Activated CD4-positive, alpha-beta T cell treated with anti-CD3 and anti-CD28 coated beads for 36 hours (primary cell): ENCODE measurements at regions of chr11 and their contacts with region 1.

Region 1: GRCh38 chr11:75525596-75526541 is at the start of gene GDPD5:
- DNase-seq: peak; percentile 93
- ATAC-seq: peak; percentile 94
- H3K4me3 Mint-ChIP-seq: peak within 1 kb of the TSS; percentile 76
- H3K27ac Mint-ChIP-seq: peak within 1 kb of the TSS; percentile 29
- H3K4me1 Mint-ChIP-seq: peaks cover 18% of the 10 kb centered on the region
- H3K27me3 Mint-ChIP-seq: no peaks in the 10 kb centered on the region
- total RNA-seq, gene GDPD5: 16.8 to 22.0 TPM

Region 2: GRCh38 chr11:75270896-75271418 is 254.9 kb before region 1 on chr11:
- CTCF ChIA-PET with region 1: interaction called, 3 read pairs
- POLR2A ChIA-PET with region 1: no interaction called
- intact Hi-C with region 1: loop called in 1 of 2 experiments (anchors 10 kb)
- DNase-seq: no peak
- ATAC-seq: no peak
- H3K4me3 Mint-ChIP-seq: no peak overlapping the region
- H3K27ac Mint-ChIP-seq: no peak overlapping the region
- H3K4me1 Mint-ChIP-seq: peaks cover 25% of the 10 kb centered on the region
- H3K27me3 Mint-ChIP-seq: no peaks in the 10 kb centered on the region

Region 3: GRCh38 chr11:75429902-75430719 is 95.8 kb before region 1 on chr11:
- CTCF ChIA-PET with region 1: interaction called, 4 read pairs
- POLR2A ChIA-PET with region 1: no interaction called
- intact Hi-C with region 1: loop called in 1 of 2 experiments (anchors 1 kb)
- DNase-seq: peak; percentile 77
- ATAC-seq: peak; percentile 65
- H3K4me3 Mint-ChIP-seq: peak overlapping the region; percentile 60
- H3K27ac Mint-ChIP-seq: no peak overlapping the region
- H3K4me1 Mint-ChIP-seq: peaks cover 16% of the 10 kb centered on the region
- H3K27me3 Mint-ChIP-seq: peaks cover 49% of the 10 kb centered on the region

Region 4: DNA sequence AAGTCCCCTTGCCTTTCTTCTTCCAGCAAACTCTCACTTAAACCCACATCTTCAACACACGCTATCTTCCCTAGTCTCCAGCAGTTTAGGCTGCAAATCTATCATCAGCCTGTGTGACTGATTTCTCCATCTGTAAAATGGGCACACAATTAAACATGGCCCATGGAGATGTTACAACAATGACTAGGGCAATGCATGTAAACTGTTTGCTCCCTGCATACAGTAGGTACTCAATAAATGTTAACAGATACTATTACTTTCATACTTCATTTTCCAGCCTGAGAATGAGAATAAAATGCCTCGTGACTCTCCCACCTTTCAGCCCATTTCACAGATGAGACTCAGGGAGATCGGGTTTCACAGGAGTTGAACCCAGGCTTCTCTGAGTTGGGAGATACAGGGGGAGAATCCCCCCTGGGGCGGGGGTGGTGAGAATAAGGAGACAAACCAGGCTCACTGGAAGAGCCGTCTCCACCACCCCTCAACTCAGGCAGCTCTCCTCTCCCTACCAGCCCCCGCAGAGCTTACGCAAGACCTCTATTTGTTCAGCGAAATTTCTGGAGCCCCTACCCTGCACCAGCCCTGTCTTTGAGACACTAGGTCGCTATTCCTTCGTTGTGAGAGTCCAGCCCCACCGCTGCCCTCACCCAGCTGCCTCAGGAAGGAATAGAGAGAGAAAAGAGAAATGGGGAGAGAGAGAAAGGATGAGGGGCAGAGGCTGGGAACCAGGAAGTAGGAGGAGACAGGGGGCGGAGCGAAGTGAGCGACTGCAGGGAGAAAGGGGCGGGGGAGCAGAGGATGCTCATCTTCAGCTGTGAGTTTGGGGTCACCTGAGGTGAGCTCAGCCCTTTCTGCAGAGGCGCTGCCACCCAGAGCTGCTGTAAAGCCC is 50.7 kb before region 1 on chr11:
- CTCF ChIA-PET with region 1: interaction called, 3 read pairs
- POLR2A ChIA-PET with region 1: no interaction called
- intact Hi-C with region 1: loop called in 1 of 2 experiments (anchors 1 kb)
- DNase-seq: peak; percentile 81
- ATAC-seq: peak; percentile 88
- H3K4me3 Mint-ChIP-seq: peak overlapping the region; percentile 35
- H3K27ac Mint-ChIP-seq: peak overlapping the region; percentile 76
- H3K4me1 Mint-ChIP-seq: peaks cover 17% of the 10 kb centered on the region
- H3K27me3 Mint-ChIP-seq: no peaks in the 10 kb centered on the region

Region 5: DNA sequence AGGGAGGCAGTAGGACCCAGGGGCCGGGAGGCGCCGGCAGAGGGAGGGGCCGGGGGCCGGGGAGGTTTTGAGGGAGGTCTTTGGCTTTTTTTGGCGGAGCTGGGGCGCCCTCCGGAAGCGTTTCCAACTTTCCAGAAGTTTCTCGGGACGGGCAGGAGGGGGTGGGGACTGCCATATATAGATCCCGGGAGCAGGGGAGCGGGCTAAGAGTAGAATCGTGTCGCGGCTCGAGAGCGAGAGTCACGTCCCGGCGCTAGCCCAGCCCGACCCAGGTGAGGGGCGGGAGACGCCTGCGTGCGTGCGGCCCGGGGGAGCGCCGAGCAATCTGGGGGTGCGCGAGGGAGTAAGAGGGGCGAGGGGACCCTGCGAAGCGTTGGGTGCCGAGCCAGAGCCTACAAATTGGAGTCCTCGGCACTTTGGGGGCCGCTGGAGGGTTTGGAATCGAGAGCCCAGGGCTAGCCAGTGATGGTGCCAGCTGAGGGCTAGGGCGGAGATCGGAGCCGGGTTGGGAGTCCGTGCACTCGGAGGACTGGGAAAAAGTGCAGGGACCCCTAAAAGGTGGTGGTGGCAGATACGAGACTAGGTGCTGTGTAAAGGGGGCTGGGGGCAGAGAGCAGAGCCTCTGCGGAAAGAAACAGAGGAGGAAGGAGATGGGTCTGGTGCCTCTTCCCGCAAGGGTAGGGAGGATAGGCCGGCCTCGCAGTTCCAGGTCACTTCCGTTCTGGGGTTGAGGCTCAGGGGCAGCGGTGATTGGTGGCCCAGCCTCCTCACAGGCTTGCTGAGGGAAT is 36.4 kb after region 1 on chr11 and contains the start of gene SERPINH1:
- CTCF ChIA-PET with region 1: interaction called, 4 read pairs
- POLR2A ChIA-PET with region 1: interaction called, 5 read pairs
- intact Hi-C with region 1: loop called in 1 of 2 experiments (anchors 1 kb)
- DNase-seq: peak; percentile 88
- ATAC-seq: peak; percentile 93
- H3K4me3 Mint-ChIP-seq: peak within 1 kb of the TSS; percentile 99
- H3K27ac Mint-ChIP-seq: peak within 1 kb of the TSS; percentile 98
- H3K4me1 Mint-ChIP-seq: peaks cover 28% of the 10 kb centered on the region
- H3K27me3 Mint-ChIP-seq: no peaks in the 10 kb centered on the region
- total RNA-seq, gene SERPINH1: 20.3 to 23.1 TPM

Region 6: DNA sequence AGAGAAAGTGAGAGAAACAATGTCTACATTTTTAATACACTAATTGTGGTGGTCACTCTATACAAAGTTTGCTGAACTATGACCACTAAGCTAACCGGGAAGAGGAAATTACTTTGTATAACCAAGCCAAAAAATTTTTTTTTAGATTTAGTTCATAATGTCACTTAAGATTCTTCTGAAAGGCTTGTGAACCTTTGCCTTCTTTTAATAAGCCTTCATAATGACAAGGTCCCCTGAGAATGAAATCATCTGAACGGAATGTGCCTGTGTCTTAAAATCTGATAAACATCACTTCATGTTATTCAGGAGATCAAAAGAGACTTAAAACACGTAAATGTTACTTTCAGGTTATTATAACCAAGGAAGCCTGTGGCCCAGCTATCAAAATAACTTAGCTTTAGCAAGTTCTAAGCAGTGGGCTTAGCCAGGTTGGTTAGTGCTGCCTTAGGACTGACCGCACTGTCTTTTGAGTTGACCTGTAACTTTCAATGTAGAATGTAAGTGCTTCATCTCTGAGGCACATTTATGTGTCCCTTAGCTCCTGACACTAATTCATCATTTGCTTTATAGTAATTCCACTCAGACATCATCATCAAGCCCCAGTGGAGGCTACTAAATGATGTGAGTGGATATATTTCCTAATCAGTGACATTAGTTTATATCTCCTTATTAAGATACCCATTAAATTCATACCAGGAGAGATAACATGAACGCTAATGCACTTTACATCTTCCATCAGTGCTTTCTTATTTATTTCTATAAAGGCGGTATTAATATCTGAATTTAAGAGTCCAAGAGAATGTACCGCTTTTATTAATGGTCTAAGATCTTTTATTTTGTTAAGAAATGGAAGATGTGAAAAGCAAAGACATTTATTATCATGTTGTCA is 557.9 kb after region 1 on chr11:
- CTCF ChIA-PET with region 1: no interaction called
- POLR2A ChIA-PET with region 1: no interaction called
- intact Hi-C with region 1: no loop called
- DNase-seq: no peak
- ATAC-seq: no peak
- H3K4me3 Mint-ChIP-seq: no peak overlapping the region
- H3K27ac Mint-ChIP-seq: no peak overlapping the region
- H3K4me1 Mint-ChIP-seq: no peaks in the 10 kb centered on the region
- H3K27me3 Mint-ChIP-seq: no peaks in the 10 kb centered on the region